A549 (cell line): ENCODE measurements at regions of chr1 and their contacts with region 1.

Region 1: GRCh38 chr1:174022080-174022975 is at the start of gene RC3H1:
- DNase-seq: peak; percentile 67 to 87
- ATAC-seq: peak; percentile 91 to 93
- H3K4me3 ChIP-seq: peak within 1 kb of the TSS; percentile 69
- H3K27ac ChIP-seq: peak within 1 kb of the TSS; percentile 89 to 99
- H3K4me1 ChIP-seq: peaks cover 44% of the 10 kb centered on the region
- CTCF ChIP-seq: no peak
- EP300 ChIP-seq: no peak
- POLR2A ChIP-seq: peak; percentile 88
- RAD21 ChIP-seq: no peak
- polyA plus RNA-seq, gene RC3H1: 12.7 and 17.3 TPM in 2 replicates

Region 2: GRCh38 chr1:173925306-173926242 is 96.8 kb before region 1 on chr1:
- CTCF ChIA-PET with region 1: no interaction called
- POLR2A ChIA-PET with region 1: no interaction called
- DNase-seq: no peak
- ATAC-seq: no peak
- H3K4me3 ChIP-seq: no peak overlapping the region
- H3K27ac ChIP-seq: no peak overlapping the region
- H3K4me1 ChIP-seq: 0 out of 3 replicates have a peak, but pooled peaks cover 3% of the 10 kb centered on the region
- CTCF ChIP-seq: no peak
- EP300 ChIP-seq: no peak
- POLR2A ChIP-seq: no peak
- RAD21 ChIP-seq: no peak

Region 3: GRCh38 chr1:174008979-174009378 is 13.3 kb before region 1 on chr1:
- CTCF ChIA-PET with region 1: interaction called, 4 read pairs
- POLR2A ChIA-PET with region 1: interaction called, 10 read pairs
- DNase-seq: no peak
- ATAC-seq: no peak
- H3K4me3 ChIP-seq: no peak overlapping the region
- H3K27ac ChIP-seq: no peak overlapping the region
- H3K4me1 ChIP-seq: peaks cover 5% of the 10 kb centered on the region; the same call in 1 of the 3 replicates
- CTCF ChIP-seq: no peak
- EP300 ChIP-seq: no peak
- POLR2A ChIP-seq: no peak
- RAD21 ChIP-seq: no peak

Region 4: GRCh38 chr1:174040387-174040786 is 18.1 kb after region 1 on chr1:
- CTCF ChIA-PET with region 1: no interaction called
- POLR2A ChIA-PET with region 1: interaction called, 12 read pairs
- DNase-seq: peak in 1 of 2 experiments; percentile 63
- ATAC-seq: peak; percentile 78 to 93
- H3K4me3 ChIP-seq: no peak overlapping the region
- H3K27ac ChIP-seq: no peak overlapping the region
- H3K4me1 ChIP-seq: peaks cover 4% of the 10 kb centered on the region; the same call in 1 of the 3 replicates
- CTCF ChIP-seq: no peak
- EP300 ChIP-seq: no peak
- POLR2A ChIP-seq: no peak
- RAD21 ChIP-seq: no peak